Activated B cell treated with CpG ODN at 0.5 μM for 24 hours (primary cell): ENCODE measurements at regions of chr2 and their contacts with region 1.

Region 1: GRCh38 chr2:135985018-135985825 is at the start of gene DARS1:
- DNase-seq: peak; percentile 80
- ATAC-seq: peak; percentile 86
- H3K4me3 Mint-ChIP-seq: peak within 1 kb of the TSS; percentile 95
- H3K27ac Mint-ChIP-seq: peak within 1 kb of the TSS; percentile 97
- H3K4me1 Mint-ChIP-seq: peaks cover 50% of the 10 kb centered on the region
- H3K27me3 Mint-ChIP-seq: no peaks in the 10 kb centered on the region
- CTCF ChIP-seq: no peak
- total RNA-seq, gene DARS1: 96.3 and 103 TPM in 2 replicates

Region 2: DNA sequence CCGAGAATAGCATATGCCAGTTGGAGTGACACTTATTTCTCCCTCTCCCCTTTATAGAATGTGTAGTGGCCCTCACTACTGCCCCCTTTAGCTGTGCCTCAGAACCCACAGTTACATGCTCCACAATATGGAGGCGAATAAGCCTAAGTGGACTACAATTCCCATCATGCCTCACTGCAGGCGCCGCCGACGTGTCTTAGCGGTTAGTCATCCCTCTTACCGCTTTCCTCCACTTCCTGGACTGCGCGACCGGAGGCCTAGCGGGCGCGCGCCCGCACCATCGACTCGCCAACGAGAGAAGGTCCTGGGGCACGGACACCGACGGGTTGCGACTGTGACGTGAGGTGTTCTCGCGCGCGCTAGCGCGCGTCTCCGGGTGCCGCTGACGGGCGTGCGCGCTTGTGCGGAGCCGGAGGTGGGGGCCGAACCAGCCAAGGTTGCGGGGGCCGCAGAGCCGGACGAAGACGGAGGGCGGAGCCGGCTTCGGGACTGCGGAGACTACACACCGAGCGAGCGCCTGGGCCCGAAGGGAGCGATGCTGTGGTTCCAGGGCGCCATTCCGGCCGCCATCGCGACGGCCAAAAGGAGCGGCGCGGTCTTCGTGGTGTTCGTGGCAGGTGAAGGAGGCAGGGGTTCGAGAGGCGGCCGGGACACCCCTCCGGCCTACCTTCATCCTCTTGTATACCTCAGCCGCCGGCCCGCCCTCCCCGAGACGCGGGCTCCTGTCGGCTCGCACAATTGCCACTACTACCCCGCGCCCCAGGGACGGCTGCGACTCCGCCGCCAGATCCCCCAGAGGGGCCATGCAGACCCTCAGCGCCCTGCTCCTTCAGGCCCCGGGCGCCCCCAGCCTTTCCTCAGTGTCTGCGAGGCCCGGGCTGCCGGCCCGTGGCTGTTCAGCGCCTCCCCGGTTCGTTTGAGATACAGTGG is 243.6 kb before region 1 on chr2 and contains the start of gene UBXN4:
- CTCF ChIA-PET with region 1: no interaction called
- POLR2A ChIA-PET with region 1: no interaction called
- intact Hi-C with region 1: loop called (anchors 2 kb)
- DNase-seq: peak; percentile 81
- ATAC-seq: peak; percentile 87
- H3K4me3 Mint-ChIP-seq: peak within 1 kb of the TSS; percentile 99
- H3K27ac Mint-ChIP-seq: peak within 1 kb of the TSS; percentile 99
- H3K4me1 Mint-ChIP-seq: peaks cover 40% of the 10 kb centered on the region
- H3K27me3 Mint-ChIP-seq: no peaks in the 10 kb centered on the region
- CTCF ChIP-seq: no peak
- total RNA-seq, gene UBXN4: 87.8 and 107 TPM in 2 replicates

Region 3: GRCh38 chr2:135963841-135964240 is 21.4 kb before region 1 on chr2:
- CTCF ChIA-PET with region 1: no interaction called
- POLR2A ChIA-PET with region 1: interaction called, 5 read pairs
- intact Hi-C with region 1: loop called (anchors 2 kb)
- DNase-seq: no peak
- ATAC-seq: no peak
- H3K4me3 Mint-ChIP-seq: no peak overlapping the region
- H3K27ac Mint-ChIP-seq: no peak overlapping the region
- H3K4me1 Mint-ChIP-seq: peaks cover 45% of the 10 kb centered on the region
- H3K27me3 Mint-ChIP-seq: no peaks in the 10 kb centered on the region
- CTCF ChIP-seq: no peak

Region 4: DNA sequence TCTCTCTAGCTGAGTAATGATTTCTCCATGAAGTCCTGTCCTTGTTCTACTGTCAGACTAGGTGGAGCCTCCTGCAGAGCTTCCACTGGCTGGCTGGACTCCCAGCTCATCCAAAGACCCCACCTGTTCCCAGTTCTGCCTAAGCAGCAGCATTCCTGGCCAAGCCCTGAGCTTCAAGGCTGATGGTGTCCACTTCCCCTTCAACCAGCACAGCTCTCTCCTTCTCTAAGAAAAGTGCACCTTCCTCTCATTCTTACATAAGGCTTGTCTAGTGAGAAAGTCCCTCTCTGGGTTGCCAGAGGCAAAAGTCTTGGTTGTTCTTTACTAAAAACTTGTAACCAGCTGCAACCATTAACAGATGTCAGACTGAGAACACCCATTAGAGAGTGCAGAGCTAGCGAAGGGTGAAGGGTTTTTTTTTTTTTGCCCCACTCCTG is 73.8 kb after region 1 on chr2:
- CTCF ChIA-PET with region 1: no interaction called
- POLR2A ChIA-PET with region 1: interaction called, 6 read pairs
- intact Hi-C with region 1: loop called (anchors 2 kb)
- DNase-seq: no peak
- ATAC-seq: peak; percentile 63
- H3K4me3 Mint-ChIP-seq: peak overlapping the region; percentile 62
- H3K27ac Mint-ChIP-seq: peak overlapping the region; percentile 77
- H3K4me1 Mint-ChIP-seq: peaks cover 76% of the 10 kb centered on the region
- H3K27me3 Mint-ChIP-seq: no peaks in the 10 kb centered on the region
- CTCF ChIP-seq: no peak

Region 5: DNA sequence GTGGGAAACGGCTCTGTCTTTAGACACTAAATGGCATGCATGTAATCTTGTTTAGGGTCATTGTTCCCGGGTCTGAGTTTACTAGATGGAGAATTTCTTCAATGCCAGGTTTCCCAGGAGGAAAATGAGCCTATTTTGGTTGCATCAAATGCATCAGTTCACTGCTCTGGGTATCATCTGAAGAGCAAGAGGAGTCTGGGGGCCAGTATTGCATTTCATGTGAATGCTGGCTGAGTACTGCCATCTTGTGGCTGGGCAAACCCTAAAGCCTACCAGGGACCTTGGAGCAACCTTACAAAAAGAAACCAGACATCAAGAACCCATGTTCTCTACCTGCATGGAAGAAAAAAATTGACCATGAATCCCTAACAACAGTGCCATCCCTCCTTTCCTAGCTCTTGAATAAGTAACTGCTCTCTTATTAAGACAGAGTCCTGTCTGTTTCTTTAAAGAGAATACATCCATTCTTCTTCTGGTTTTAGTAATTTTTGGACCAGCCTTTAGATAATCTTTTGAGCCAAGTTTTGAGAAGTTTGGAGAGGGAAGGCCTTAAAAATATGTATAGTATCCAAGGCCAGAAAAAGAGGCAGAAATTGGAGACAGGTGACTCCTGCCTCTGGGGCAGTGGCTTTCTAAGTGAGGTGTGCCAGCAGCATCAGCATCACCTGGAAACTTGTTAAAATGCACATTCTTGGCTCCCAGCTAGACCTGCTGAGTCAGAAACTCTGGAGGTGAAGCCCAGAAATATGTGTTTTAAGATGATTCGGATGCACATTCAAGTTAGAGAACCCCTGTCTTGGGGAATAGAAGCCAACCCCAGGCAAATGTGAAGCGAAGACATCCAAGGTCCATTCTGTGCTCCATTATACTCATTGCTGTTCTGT is 393.7 kb after region 1 on chr2:
- CTCF ChIA-PET with region 1: interaction called, 6 read pairs
- POLR2A ChIA-PET with region 1: interaction called, 17 read pairs
- intact Hi-C with region 1: loop called (anchors 2 kb)
- DNase-seq: no peak
- ATAC-seq: peak; percentile 40
- H3K4me3 Mint-ChIP-seq: no peak overlapping the region
- H3K27ac Mint-ChIP-seq: peak overlapping the region; percentile 92
- H3K4me1 Mint-ChIP-seq: peaks cover 81% of the 10 kb centered on the region
- H3K27me3 Mint-ChIP-seq: no peaks in the 10 kb centered on the region
- CTCF ChIP-seq: peak; percentile 44